GM12878 (cell line): ENCODE measurements at regions of chr5 and their contacts with region 1.

Region 1: DNA sequence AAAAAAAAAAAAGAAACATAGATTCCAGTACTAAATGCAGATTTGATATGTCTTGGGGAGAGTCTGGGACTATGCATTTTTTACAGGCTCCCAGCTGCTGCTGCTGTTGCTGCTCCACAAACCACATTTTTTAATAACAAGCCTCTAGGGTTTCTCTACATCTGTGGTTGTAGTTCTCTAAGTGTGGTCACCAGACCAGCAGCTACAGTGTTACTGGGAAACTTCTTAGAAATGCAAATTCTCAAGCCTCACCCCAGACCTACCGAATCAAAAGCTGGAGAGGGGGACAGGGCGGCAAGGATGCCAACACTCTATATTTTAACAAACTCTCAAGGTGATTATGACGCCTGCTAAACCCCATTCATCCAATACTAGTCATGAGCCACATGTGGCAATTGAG is 293.4 kb upstream of the PTGER4 start:
- DNase-seq: peak; percentile 62
- ATAC-seq: peak; percentile 89
- H3K4me3 ChIP-seq: no peak overlapping the region
- H3K27ac ChIP-seq: no peak overlapping the region
- H3K4me1 ChIP-seq: peaks cover 26% of the 10 kb centered on the region
- H3K27me3 ChIP-seq: no peaks in the 10 kb centered on the region
- CTCF ChIP-seq: no peak
- EP300 ChIP-seq: no peak
- POLR2A ChIP-seq: no peak
- RAD21 ChIP-seq: no peak

Region 2: GRCh38 chr5:40578501-40579451 is 192.5 kb after region 1 on chr5:
- CTCF ChIA-PET with region 1: no interaction called
- POLR2A ChIA-PET with region 1: no interaction called
- RAD21 ChIA-PET with region 1: no interaction called
- SMC1A ChIA-PET with region 1: no interaction called
- in situ Hi-C with region 1: no loop called
- intact Hi-C with region 1: loop called (anchors 2 kb)
- DNase-seq: peak; percentile 76
- ATAC-seq: peak; percentile 97
- H3K4me3 ChIP-seq: no peak overlapping the region
- H3K27ac ChIP-seq: no peak overlapping the region
- H3K4me1 ChIP-seq: peaks cover 11% of the 10 kb centered on the region; the same call in 1 of the 2 replicates
- H3K27me3 ChIP-seq: no peaks in the 10 kb centered on the region
- CTCF ChIP-seq: no peak
- EP300 ChIP-seq: peak; percentile 47 to 81; a peak in 2 of 4 replicates
- POLR2A ChIP-seq: no peak
- RAD21 ChIP-seq: peak; percentile 25; the same call in 1 of the 2 replicates